GM12878 (cell line): ENCODE measurements at regions of chr22 and their contacts with region 1.

Region 1: GRCh38 chr22:25465949-25466348 is 98.5 kb upstream of the GRK3 start:
- DNase-seq: no peak
- ATAC-seq: no peak
- H3K4me3 ChIP-seq: no peak overlapping the region
- H3K27ac ChIP-seq: no peak overlapping the region
- H3K4me1 ChIP-seq: no peaks in the 10 kb centered on the region
- H3K27me3 ChIP-seq: no peaks in the 10 kb centered on the region
- CTCF ChIP-seq: no peak
- EP300 ChIP-seq: no peak
- POLR2A ChIP-seq: no peak
- RAD21 ChIP-seq: no peak

Region 2: DNA sequence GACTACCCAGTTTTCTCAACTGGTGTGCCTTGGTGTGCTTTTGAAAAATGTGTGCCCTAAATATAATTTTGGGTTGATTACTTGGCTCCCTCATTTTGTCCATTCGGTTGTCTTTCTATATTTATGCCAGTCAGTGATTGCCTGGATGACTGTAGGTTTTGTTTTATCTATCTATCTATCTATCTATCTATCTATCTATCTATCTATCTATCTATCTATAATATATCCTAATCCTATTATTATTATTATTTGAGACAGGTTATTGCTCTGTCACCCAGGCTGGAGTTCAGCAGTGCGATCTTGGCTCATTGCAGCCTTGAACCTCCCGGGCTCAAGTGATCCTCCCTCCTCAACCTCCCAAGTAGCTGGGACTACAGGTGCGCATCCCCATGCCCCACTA is 12.9 kb before region 1 on chr22:
- CTCF ChIA-PET with region 1: interaction called, 10 read pairs
- POLR2A ChIA-PET with region 1: interaction called, 11 read pairs
- RAD21 ChIA-PET with region 1: interaction called, 5 read pairs
- SMC1A ChIA-PET with region 1: interaction called, 3 read pairs
- in situ Hi-C with region 1: no loop called
- intact Hi-C with region 1: no loop called
- DNase-seq: no peak
- ATAC-seq: no peak
- H3K4me3 ChIP-seq: no peak overlapping the region
- H3K27ac ChIP-seq: no peak overlapping the region
- H3K4me1 ChIP-seq: no peaks in the 10 kb centered on the region
- H3K27me3 ChIP-seq: no peaks in the 10 kb centered on the region
- CTCF ChIP-seq: no peak
- EP300 ChIP-seq: no peak
- POLR2A ChIP-seq: no peak
- RAD21 ChIP-seq: no peak

Region 3: DNA sequence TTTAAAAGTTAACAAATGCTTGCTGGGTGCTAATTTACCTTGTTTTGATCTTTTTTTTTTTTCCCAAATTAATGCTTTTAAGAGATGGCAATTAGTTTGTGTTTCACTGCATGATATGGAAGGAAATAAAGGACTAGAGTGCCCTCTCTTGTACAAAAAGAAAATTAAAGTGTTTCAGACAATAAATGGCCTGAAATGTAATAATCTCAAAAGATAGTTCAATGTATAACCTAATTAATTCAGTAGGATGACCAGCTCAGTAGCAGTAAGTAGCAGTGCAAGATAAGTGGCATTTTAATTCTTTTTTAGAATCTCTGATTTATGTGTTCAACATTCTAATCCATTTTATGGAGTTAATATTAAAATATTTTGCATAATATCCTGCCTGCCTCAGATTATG is 236.1 kb after region 1 on chr22:
- CTCF ChIA-PET with region 1: interaction called, 5 read pairs
- POLR2A ChIA-PET with region 1: no interaction called
- RAD21 ChIA-PET with region 1: interaction called, 13 read pairs
- SMC1A ChIA-PET with region 1: interaction called, 6 read pairs
- in situ Hi-C with region 1: loop called (anchors 5 kb)
- intact Hi-C with region 1: loop called (anchors 2 kb)
- DNase-seq: no peak
- ATAC-seq: peak; percentile 61
- H3K4me3 ChIP-seq: no peak overlapping the region
- H3K27ac ChIP-seq: no peak overlapping the region; the same call in 1 of the 2 replicates
- H3K4me1 ChIP-seq: peaks cover 15% of the 10 kb centered on the region; the same call in 1 of the 2 replicates
- H3K27me3 ChIP-seq: no peaks in the 10 kb centered on the region
- CTCF ChIP-seq: peak; percentile 15 to 57 (median 33); a peak in 2 of 6 replicates
- EP300 ChIP-seq: no peak
- POLR2A ChIP-seq: no peak
- RAD21 ChIP-seq: peak; percentile 72

Region 4: DNA sequence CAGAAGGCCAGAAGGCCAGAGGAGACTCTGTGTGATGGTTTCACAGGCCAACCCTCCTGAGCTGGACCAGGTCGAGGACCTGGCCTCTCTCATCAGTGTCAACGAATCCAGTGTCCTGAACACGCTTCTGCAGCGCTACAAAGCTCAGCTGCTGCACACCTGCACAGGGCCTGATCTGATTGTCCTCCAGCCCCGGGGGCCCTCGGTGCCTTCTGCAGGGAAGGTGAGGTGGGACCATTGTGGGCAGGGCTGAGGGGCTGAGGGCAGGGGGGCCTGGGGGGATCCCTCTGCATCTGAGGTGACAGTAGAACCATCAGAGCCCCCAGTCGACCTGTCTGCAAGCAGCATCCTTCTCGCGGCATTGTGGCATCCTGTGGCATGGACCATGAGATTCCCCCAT is 306.3 kb after region 1 on chr22:
- CTCF ChIA-PET with region 1: interaction called, 20 read pairs
- POLR2A ChIA-PET with region 1: no interaction called
- RAD21 ChIA-PET with region 1: interaction called, 19 read pairs
- SMC1A ChIA-PET with region 1: interaction called, 6 read pairs
- in situ Hi-C with region 1: loop called (anchors 5 kb)
- intact Hi-C with region 1: loop called (anchors 1 kb)
- DNase-seq: no peak
- ATAC-seq: no peak; the same call in 2 of the 3 replicates
- H3K4me3 ChIP-seq: no peak overlapping the region
- H3K27ac ChIP-seq: no peak overlapping the region
- H3K4me1 ChIP-seq: 0 out of 2 replicates have a peak, but pooled peaks cover 3% of the 10 kb centered on the region
- H3K27me3 ChIP-seq: no peaks in the 10 kb centered on the region
- CTCF ChIP-seq: no peak
- EP300 ChIP-seq: no peak
- POLR2A ChIP-seq: no peak
- RAD21 ChIP-seq: no peak

Region 5: DNA sequence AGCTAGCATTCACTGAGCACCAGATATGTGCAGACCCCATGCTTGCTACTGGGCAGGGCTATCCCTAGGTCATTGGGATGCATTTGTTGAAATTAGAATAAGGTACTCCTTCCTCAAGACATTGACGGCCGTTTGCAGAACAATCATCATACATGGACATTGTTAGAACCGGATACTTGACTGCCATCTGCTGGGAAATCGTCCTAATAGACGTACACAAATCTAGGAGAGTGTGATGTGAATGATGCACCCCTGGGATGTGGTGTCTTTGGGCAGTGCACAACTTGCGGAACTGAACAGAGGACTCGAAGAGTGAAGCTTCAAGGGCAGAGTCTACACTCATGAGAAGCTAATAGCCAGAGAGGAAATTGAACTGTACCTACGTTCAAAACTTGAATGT is 311.9 kb after region 1 on chr22:
- CTCF ChIA-PET with region 1: interaction called, 20 read pairs
- POLR2A ChIA-PET with region 1: no interaction called
- RAD21 ChIA-PET with region 1: interaction called, 19 read pairs
- SMC1A ChIA-PET with region 1: interaction called, 6 read pairs
- in situ Hi-C with region 1: loop called (anchors 5 kb)
- intact Hi-C with region 1: loop called (anchors 1 kb)
- DNase-seq: peak; percentile 11
- ATAC-seq: peak; percentile 70
- H3K4me3 ChIP-seq: no peak overlapping the region
- H3K27ac ChIP-seq: no peak overlapping the region
- H3K4me1 ChIP-seq: no peaks in the 10 kb centered on the region
- H3K27me3 ChIP-seq: no peaks in the 10 kb centered on the region
- CTCF ChIP-seq: peak; percentile 25 to 44 (median 44); a peak in 5 of 6 replicates
- EP300 ChIP-seq: no peak
- POLR2A ChIP-seq: no peak
- RAD21 ChIP-seq: peak; percentile 36; the same call in 1 of the 2 replicates